Heart left ventricle (tissue), 16 donors: ENCODE measurements at regions of chr18 and their contacts with region 1.

Region 1: DNA sequence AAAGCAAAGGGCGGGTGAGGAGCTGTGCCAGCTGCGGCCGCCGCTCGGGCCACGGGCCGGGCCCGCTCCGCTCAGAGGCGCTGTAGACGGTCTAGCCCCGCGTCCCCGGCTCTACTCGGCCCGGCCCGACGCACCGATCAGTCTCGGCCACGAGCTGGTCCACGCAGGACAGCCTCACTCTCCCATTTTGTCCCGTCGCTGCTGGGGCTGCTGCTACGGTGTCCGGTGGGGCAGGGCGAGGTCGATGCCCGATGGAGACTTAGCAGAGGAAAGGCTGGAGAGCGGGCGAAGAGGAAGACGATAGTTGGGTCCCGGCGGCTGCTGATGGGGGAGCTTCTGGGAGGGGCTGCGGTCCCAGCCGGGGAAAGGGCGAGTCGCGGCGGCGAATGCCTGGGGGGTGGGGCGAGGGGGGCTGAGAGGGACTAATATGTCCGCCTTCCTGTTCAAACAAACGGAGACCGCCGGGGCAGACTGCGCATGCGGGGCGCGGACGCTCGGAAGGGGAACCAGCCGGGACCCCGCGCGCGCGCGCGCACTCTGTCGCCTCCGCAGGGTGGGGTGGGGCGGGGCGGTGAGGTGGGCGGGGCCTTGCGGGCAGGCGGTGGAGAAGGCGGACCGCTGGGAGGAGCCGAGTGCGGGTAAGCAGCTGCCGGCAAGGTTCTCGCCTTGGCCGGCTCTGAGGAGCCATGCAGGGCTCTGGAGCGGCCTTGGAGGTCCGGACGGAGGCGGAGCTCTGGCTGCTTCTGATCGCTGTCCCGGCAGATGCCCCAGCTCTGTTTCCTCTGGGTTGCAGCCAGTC is at the start of gene ROCK1:
- DNase-seq: peak; percentile 99 to 100 (median 99)
- ATAC-seq: peak; percentile 96 to 98 (median 97)
- H3K4me3 ChIP-seq: peak within 1 kb of the TSS; percentile 64 to 98 (median 93)
- H3K27ac ChIP-seq: peak within 1 kb of the TSS; percentile 92 to 98 (median 96)
- H3K4me1 ChIP-seq: peaks cover 0 to 48% (median 27%) of the 10 kb centered on the region in 12 donors
- H3K27me3 ChIP-seq: no peaks in the 10 kb centered on the region
- CTCF ChIP-seq: peak in 1 of 12 donors; percentile 11
- POLR2A ChIP-seq: peak in 1 of 2 donors; percentile 88
- total RNA-seq, gene ROCK1: 25.1 to 46.2 (median 37.8) TPM

Region 2: GRCh38 chr18:20996418-20996817 is 115.1 kb before region 1 on chr18:
- intact Hi-C with region 1: loop called in 5 of 10 experiments (anchors 5 to 10 kb)
- DNase-seq: no peak
- ATAC-seq: no peak
- H3K4me3 ChIP-seq: no peak overlapping the region
- H3K27ac ChIP-seq: no peak overlapping the region
- H3K4me1 ChIP-seq: peaks cover 0 to 16% (median 0%) of the 10 kb centered on the region in 12 donors
- H3K27me3 ChIP-seq: no peaks in the 10 kb centered on the region
- CTCF ChIP-seq: no peak
- POLR2A ChIP-seq: no peak

Region 3: DNA sequence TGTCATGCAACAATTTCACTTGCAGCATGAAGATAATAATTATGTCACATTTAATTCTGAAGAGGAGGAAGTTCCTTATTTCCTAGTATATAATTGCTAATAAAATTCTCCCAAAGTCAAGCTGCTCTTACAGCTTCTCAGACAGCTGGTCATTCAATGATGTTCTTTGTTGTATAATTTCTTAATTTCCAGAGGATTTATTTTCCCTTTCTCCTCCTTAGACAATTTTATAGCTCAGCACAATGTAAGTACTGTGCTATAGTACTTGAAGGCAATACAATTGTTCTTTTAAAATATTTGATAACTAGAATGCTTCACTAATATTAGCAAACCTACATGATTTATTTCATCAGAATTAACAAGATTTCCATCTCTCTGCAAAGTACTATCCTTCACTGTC is 73.3 kb before region 1 on chr18:
- intact Hi-C with region 1: loop called in 1 of 10 experiments (anchors 10 kb)
- DNase-seq: no peak
- ATAC-seq: no peak
- H3K4me3 ChIP-seq: no peak overlapping the region
- H3K27ac ChIP-seq: no peak overlapping the region
- H3K4me1 ChIP-seq: peaks cover 0 to 13% (median 0%) of the 10 kb centered on the region in 12 donors
- H3K27me3 ChIP-seq: no peaks in the 10 kb centered on the region
- CTCF ChIP-seq: no peak
- POLR2A ChIP-seq: no peak

Region 4: GRCh38 chr18:21053127-21053526 is 58.4 kb before region 1 on chr18:
- intact Hi-C with region 1: loop called in 4 of 10 experiments (anchors 5 to 10 kb)
- DNase-seq: no peak
- ATAC-seq: peak; percentile 45 to 88 (median 56)
- H3K4me3 ChIP-seq: no peak overlapping the region
- H3K27ac ChIP-seq: no peak overlapping the region
- H3K4me1 ChIP-seq: peaks cover 0 to 59% (median 40%) of the 10 kb centered on the region in 12 donors
- H3K27me3 ChIP-seq: no peaks in the 10 kb centered on the region
- CTCF ChIP-seq: no peak
- POLR2A ChIP-seq: no peak

Region 5: DNA sequence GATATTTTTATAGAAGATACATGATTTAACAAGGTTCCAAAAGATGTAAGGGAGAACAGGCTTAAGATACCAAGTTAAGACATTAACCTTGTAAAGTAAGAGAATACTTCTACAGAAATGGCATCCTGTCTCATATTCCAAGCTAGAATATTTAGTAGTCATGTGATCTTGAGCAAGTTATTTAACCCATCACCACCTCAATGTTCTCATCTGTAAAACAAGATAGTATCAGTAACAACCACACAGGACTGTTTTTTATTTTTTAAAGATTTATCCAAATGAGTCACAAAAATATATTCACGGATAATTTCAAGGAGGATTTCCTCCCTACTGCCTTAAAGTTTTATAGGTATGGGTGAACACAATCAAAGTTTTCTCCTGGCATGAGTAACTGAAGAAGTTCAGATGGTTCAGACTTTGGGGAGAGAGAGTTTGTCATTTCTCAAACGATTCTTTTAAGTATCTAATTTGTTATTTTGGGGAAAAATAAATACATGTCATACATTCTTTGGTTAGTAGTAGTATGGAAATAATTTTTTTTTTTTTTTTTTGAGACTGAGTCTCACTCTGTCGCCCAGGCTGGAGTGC is 25.9 kb before region 1 on chr18:
- intact Hi-C with region 1: no loop called
- DNase-seq: no peak
- ATAC-seq: no peak
- H3K4me3 ChIP-seq: no peak overlapping the region
- H3K27ac ChIP-seq: no peak overlapping the region
- H3K4me1 ChIP-seq: peaks cover 0 to 28% (median 0%) of the 10 kb centered on the region in 12 donors
- H3K27me3 ChIP-seq: no peaks in the 10 kb centered on the region
- CTCF ChIP-seq: no peak
- POLR2A ChIP-seq: no peak

Region 6: GRCh38 chr18:21129566-21130216 is 18.2 kb after region 1 on chr18:
- intact Hi-C with region 1: no loop called
- DNase-seq: no peak
- ATAC-seq: peak in 1 of 4 donors; percentile 55
- H3K4me3 ChIP-seq: no peak overlapping the region
- H3K27ac ChIP-seq: no peak overlapping the region
- H3K4me1 ChIP-seq: peaks cover 0 to 15% (median 0%) of the 10 kb centered on the region in 12 donors
- H3K27me3 ChIP-seq: no peaks in the 10 kb centered on the region
- CTCF ChIP-seq: no peak
- POLR2A ChIP-seq: no peak

Region 7: DNA sequence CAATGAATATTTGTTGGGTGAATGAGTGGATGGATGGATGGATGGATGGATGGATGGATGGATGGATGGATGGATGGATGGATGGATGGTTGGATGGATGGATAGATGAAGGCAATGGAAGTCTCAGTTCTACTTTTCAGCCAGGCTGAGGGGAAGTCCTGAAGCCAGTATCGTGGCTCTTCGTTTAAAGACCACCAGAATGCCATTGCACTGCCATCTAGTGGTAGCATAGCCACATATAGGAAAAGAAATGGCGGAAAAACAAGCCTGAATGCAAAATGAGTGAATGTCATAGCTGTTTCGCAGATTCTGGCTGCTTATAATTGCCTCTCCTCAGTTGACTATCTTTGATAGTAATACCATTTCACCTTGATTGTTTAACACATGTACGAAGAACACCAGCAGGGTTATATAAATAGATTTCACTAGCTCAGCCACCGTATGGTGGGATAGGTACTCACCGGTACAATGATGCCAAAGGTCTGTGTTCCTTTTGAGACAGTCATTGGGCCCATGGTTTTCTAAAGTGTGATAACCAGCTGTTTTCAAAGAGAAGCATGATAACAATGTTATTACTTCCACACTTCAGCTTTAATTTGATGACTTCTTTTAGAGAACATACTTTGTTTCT is 68.2 kb after region 1 on chr18:
- intact Hi-C with region 1: loop called in 2 of 10 experiments (anchors 5 to 10 kb)
- DNase-seq: peak in 3 of 5 donors; percentile 44 to 52 (median 48)
- ATAC-seq: peak in 3 of 4 donors; percentile 65 to 74 (median 69)
- H3K4me3 ChIP-seq: no peak overlapping the region
- H3K27ac ChIP-seq: no peak overlapping the region
- H3K4me1 ChIP-seq: peaks cover 0 to 3% (median 0%) of the 10 kb centered on the region in 12 donors
- H3K27me3 ChIP-seq: no peaks in the 10 kb centered on the region
- CTCF ChIP-seq: peak; percentile 59 to 82 (median 70)
- POLR2A ChIP-seq: no peak

Region 8: GRCh38 chr18:21548637-21549036 is 437.1 kb after region 1 on chr18:
- intact Hi-C with region 1: no loop called
- DNase-seq: no peak
- ATAC-seq: no peak
- H3K4me3 ChIP-seq: no peak overlapping the region
- H3K27ac ChIP-seq: no peak overlapping the region
- H3K4me1 ChIP-seq: no peaks in the 10 kb centered on the region
- H3K27me3 ChIP-seq: no peaks in the 10 kb centered on the region
- CTCF ChIP-seq: no peak
- POLR2A ChIP-seq: no peak